ENCODE measurements at regions of chr17 and their contacts with region 1.

Region 1: DNA sequence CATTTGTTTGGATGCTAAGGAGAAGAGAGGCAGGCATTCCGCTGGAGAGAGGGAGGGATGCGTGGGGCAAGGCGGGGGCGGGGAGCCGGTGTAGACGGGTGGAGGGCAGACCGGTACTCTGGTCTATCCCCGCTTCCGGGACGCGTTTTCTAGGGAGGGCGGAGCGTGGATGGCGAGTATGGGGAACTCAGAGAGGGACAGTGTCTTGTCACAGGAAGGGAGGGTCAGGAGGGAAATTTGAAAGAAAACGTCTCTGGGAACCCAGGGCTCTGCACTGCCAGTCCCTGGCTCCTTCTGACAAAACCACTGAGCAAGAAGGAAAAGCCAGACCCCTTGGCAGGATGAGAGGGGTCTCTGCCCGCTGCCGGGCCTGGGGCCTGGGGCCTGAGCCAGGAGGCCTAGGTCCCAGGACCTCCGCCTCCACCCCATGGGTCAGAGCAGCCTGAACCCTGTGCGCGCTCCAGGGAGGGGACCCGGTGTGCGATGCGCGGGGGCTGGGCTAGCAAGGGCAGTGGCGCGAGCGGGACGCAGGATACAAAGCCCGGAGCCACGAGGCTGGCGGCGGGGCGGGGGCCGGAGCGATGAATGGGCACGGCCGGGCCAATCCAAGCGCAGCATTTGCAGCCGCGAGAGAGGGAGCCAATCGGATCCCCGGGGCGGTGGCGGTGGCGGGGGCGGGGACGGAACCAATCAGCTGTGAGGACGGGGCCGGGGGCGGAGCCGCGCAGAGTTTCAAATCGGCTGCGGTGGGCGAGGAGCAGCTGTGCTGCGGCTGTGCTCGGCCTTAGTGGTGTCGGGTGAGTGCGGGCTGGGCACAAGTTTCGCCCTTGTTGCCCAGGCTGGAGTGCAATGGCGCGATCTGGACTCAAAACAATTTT is at the start of gene PIMREG:
- DNase-seq: peak; percentile 99
- ATAC-seq: peak; percentile 90
- H3K4me3 Mint-ChIP-seq: peak within 1 kb of the TSS; percentile 99
- H3K27ac Mint-ChIP-seq: peak within 1 kb of the TSS; percentile 98
- H3K4me1 Mint-ChIP-seq: peaks cover 49% of the 10 kb centered on the region
- H3K27me3 Mint-ChIP-seq: no peaks in the 10 kb centered on the region; the same call in 1 of the 2 replicates
- CTCF ChIP-seq: no peak
- total RNA-seq, gene PIMREG: 92.2 to 102 TPM (median 99.3 TPM) in 3 replicates

Region 2: DNA sequence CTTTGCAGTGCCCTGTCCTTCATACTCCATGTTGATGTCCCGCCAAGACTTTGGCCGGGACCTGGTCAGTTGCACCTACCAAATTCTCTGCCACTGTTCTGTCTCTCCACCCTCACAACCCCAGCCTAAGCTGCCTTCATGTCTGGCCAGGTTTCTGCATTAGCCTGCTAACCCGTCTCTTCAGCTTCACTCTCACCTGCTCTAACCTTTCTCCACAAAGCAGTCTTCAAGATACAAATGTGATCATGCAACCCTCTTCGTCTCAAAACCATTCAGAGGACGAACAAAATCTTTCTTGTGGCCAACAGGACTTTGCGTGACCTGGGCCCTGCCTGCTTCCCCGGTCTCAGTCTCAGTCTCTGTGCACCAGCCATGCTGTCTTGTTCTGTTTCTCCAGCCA is 225.6 kb before region 1 on chr17:
- CTCF ChIA-PET with region 1: no interaction called
- POLR2A ChIA-PET with region 1: no interaction called
- DNase-seq: no peak
- ATAC-seq: no peak
- H3K4me3 Mint-ChIP-seq: no peak overlapping the region
- H3K27ac Mint-ChIP-seq: no peak overlapping the region; the same call in 1 of the 2 replicates
- H3K4me1 Mint-ChIP-seq: peaks cover 8% of the 10 kb centered on the region
- H3K27me3 Mint-ChIP-seq: no peaks in the 10 kb centered on the region
- CTCF ChIP-seq: no peak

Region 3: DNA sequence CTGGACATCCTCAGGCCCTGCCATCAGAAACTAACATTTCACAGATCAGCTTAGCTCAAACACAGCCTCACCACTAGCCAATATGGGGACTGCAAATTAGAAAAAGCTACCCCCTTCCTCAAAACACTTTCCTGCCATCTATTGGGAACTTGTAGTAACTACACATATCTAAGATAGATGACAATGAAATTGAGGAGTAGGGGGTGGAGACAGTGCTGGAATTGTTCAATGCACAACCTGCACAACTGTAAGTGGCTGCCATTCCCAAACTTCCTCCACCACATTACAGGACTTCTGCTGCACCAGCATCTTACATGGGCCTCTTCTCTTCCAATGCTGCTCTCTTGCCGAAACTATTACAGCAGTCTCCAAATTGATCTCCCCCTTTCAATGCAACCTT is 30.9 kb before region 1 on chr17:
- CTCF ChIA-PET with region 1: no interaction called
- POLR2A ChIA-PET with region 1: no interaction called
- DNase-seq: no peak
- ATAC-seq: peak; percentile 78
- H3K4me3 Mint-ChIP-seq: no peak overlapping the region
- H3K27ac Mint-ChIP-seq: no peak overlapping the region
- H3K4me1 Mint-ChIP-seq: peaks cover 7% of the 10 kb centered on the region
- H3K27me3 Mint-ChIP-seq: no peaks in the 10 kb centered on the region
- CTCF ChIP-seq: 0 out of 2 replicates have a peak, but pooled peaks have one; percentile 24

Region 4: DNA sequence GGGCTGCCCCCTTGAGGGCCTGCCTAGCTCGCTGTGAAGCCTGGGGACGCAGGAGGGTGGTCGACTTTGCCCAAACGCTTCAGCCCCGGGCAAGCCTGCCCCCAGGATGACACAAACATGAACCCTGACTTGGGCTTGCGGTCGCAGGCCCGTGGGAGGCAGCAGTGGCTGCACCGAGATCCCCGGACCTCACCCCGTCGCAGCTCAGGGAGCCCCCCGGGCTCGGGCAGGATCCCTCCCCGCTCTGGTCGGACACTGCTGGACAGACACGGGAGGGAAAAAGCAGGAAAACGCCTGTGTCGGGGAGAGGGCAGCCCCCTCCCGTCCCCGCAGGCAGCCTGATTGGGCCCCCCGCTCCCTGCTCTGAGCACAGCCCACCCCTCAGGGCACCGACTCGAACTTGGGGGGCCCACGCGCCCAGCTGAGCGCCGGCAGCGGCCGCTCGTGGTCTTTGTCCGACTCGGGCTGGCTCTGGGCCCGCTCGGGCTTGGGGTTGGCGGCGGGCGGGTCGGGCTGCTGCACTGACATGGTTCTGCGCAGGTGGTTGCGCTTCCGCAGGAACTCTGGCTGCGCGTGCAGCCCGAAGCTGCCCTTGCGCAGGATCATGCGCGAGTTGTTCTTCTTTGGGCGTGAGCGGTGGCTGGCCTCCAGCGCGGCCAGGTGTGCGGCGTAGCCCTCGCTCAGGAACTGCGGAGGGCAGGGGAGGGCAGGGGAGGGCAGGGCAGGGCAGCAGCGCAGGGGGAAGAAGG is 11.2 kb after region 1 on chr17:
- CTCF ChIA-PET with region 1: interaction called, 8 read pairs
- POLR2A ChIA-PET with region 1: interaction called, 24 read pairs
- DNase-seq: peak; percentile 62
- ATAC-seq: peak; percentile 49
- H3K4me3 Mint-ChIP-seq: peak overlapping the region; percentile 63
- H3K27ac Mint-ChIP-seq: no peak overlapping the region
- H3K4me1 Mint-ChIP-seq: peaks cover 45% of the 10 kb centered on the region
- H3K27me3 Mint-ChIP-seq: no peaks in the 10 kb centered on the region; the same call in 1 of the 2 replicates
- CTCF ChIP-seq: no peak

Region 5: GRCh38 chr17:6713130-6713917 is 269.4 kb after region 1 on chr17 and contains the start of gene SLC13A5:
- CTCF ChIA-PET with region 1: no interaction called
- POLR2A ChIA-PET with region 1: no interaction called
- DNase-seq: peak; percentile 87
- ATAC-seq: peak; percentile 90
- H3K4me3 Mint-ChIP-seq: peak within 1 kb of the TSS; percentile 92
- H3K27ac Mint-ChIP-seq: no peak within 1 kb of the TSS
- H3K4me1 Mint-ChIP-seq: peaks cover 21% of the 10 kb centered on the region
- H3K27me3 Mint-ChIP-seq: peaks cover 63% of the 10 kb centered on the region
- CTCF ChIP-seq: peak; percentile 29; the same call in 1 of the 2 replicates
- total RNA-seq, gene SLC13A5: 1.6 to 2.3 TPM (median 1.8 TPM) in 3 replicates

Measured in WTC11 (cell line).